CD4-positive, alpha-beta T cell (primary cell): ENCODE measurements at regions of chr5 and their contacts with region 1.

Region 1: GRCh38 chr5:64615895-64616294 is 74.4 kb upstream of the SHISAL2B start:
- DNase-seq: no peak
- ATAC-seq: no peak
- H3K4me3 ChIP-seq: no peak overlapping the region
- H3K4me3 Mint-ChIP-seq: no peak overlapping the region
- H3K27ac ChIP-seq: no peak overlapping the region
- H3K27ac Mint-ChIP-seq: no peak overlapping the region
- H3K4me1 ChIP-seq: no peaks in the 10 kb centered on the region
- H3K4me1 Mint-ChIP-seq: no peaks in the 10 kb centered on the region
- H3K27me3 ChIP-seq: peaks cover 0 to 4% of the 10 kb centered on the region in 2 experiments
- H3K27me3 Mint-ChIP-seq: peaks cover 25% of the 10 kb centered on the region
- CTCF ChIP-seq: no peak

Region 2: DNA sequence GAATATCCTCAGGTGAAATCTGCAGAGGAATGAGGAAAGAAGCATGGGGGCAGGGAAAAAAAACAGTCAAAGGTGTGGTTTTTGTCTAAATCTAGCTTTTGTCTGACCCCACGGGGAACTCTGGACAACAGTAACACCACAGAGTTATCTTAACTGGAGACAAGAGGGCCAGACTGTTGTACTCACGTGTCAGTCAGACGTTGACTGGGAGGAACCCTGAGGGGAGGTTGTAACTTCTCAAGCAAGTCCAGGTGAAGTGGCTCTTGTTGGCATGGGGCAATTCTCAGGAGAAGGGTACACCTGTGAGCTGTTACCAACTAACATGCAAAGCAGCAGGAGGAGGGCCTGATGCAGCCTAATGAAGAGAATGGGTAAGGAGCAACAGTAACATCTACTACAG is 30.3 kb after region 1 on chr5:
- CTCF ChIA-PET with region 1: no interaction called
- POLR2A ChIA-PET with region 1: no interaction called
- intact Hi-C with region 1: loop called in 1 of 2 experiments (anchors 1 kb)
- DNase-seq: no peak
- ATAC-seq: no peak
- H3K4me3 ChIP-seq: no peak overlapping the region
- H3K4me3 Mint-ChIP-seq: no peak overlapping the region
- H3K27ac ChIP-seq: no peak overlapping the region
- H3K27ac Mint-ChIP-seq: no peak overlapping the region
- H3K4me1 ChIP-seq: no peaks in the 10 kb centered on the region
- H3K4me1 Mint-ChIP-seq: no peaks in the 10 kb centered on the region
- H3K27me3 ChIP-seq: no peaks in the 10 kb centered on the region
- H3K27me3 Mint-ChIP-seq: no peaks in the 10 kb centered on the region
- CTCF ChIP-seq: no peak

Region 3: DNA sequence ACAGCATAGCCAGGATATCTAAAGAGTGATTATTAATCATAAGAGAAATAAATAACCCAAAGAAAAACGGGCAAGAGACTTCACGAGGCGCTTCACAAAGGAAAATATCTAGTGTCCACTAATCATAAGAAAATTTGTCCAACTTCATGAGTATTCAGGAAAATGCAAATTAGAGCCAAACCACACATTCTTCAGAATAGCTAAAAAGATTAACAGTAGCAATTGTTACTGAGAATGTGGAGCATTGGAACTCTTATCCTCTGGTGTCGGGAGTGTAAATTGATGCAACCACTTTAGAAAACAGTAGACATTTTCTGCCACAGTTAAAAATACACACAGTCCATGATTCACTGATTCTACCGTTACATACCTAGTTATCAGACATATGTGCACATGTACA is 298.5 kb after region 1 on chr5:
- CTCF ChIA-PET with region 1: no interaction called
- POLR2A ChIA-PET with region 1: no interaction called
- intact Hi-C with region 1: no loop called
- DNase-seq: no peak
- ATAC-seq: no peak
- H3K4me3 ChIP-seq: no peak overlapping the region
- H3K4me3 Mint-ChIP-seq: no peak overlapping the region
- H3K27ac ChIP-seq: no peak overlapping the region
- H3K27ac Mint-ChIP-seq: no peak overlapping the region
- H3K4me1 ChIP-seq: no peaks in the 10 kb centered on the region
- H3K4me1 Mint-ChIP-seq: no peaks in the 10 kb centered on the region
- H3K27me3 ChIP-seq: no peaks in the 10 kb centered on the region
- H3K27me3 Mint-ChIP-seq: no peaks in the 10 kb centered on the region
- CTCF ChIP-seq: no peak